ENCODE measurements at regions of chr6 and their contacts with region 1.

Region 1: DNA sequence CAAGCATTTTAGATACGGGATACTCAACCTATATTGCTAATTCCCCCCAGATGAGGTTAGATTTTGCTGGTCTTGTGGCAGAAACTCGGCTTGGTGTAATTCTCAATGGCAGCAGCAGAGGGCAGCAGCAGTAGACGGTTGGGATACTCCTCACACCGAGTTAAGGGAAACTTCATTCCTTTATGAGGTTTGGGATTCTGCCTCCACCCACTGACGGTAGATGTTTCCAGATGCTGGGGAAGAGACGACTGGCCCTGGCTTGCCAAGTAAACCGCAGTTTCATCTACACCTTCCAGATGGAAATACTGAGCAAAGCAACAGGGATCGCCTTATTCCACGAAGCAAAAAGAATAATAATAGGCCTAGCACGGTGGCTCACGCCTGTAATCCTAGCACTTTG is 8.2 kb upstream of the TBC1D7 start:
- DNase-seq: peak; percentile 78 to 81
- H3K4me3 ChIP-seq: no peak overlapping the region
- H3K27ac ChIP-seq: no peak overlapping the region
- H3K4me1 ChIP-seq: no peaks in the 10 kb centered on the region
- H3K27me3 ChIP-seq: no peaks in the 10 kb centered on the region
- CTCF ChIP-seq: peak; percentile 69 to 93 (median 86)
- POLR2A ChIP-seq: no peak

Region 2: GRCh38 chr6:12911387-12911960 is 425.1 kb before region 1 on chr6:
- intact Hi-C with region 1: loop called (anchors 5 kb)
- DNase-seq: no peak
- H3K4me3 ChIP-seq: no peak overlapping the region
- H3K27ac ChIP-seq: no peak overlapping the region
- H3K4me1 ChIP-seq: no peaks in the 10 kb centered on the region
- H3K27me3 ChIP-seq: no peaks in the 10 kb centered on the region
- CTCF ChIP-seq: peak in 4 of 6 experiments; percentile 26 to 76 (median 66)
- POLR2A ChIP-seq: no peak

Region 3: GRCh38 chr6:13544454-13545186 is 208.1 kb after region 1 on chr6:
- intact Hi-C with region 1: loop called (anchors 5 kb)
- DNase-seq: no peak
- H3K4me3 ChIP-seq: no peak overlapping the region
- H3K27ac ChIP-seq: no peak overlapping the region
- H3K4me1 ChIP-seq: no peaks in the 10 kb centered on the region
- H3K27me3 ChIP-seq: no peaks in the 10 kb centered on the region
- CTCF ChIP-seq: no peak
- POLR2A ChIP-seq: no peak

Region 4: DNA sequence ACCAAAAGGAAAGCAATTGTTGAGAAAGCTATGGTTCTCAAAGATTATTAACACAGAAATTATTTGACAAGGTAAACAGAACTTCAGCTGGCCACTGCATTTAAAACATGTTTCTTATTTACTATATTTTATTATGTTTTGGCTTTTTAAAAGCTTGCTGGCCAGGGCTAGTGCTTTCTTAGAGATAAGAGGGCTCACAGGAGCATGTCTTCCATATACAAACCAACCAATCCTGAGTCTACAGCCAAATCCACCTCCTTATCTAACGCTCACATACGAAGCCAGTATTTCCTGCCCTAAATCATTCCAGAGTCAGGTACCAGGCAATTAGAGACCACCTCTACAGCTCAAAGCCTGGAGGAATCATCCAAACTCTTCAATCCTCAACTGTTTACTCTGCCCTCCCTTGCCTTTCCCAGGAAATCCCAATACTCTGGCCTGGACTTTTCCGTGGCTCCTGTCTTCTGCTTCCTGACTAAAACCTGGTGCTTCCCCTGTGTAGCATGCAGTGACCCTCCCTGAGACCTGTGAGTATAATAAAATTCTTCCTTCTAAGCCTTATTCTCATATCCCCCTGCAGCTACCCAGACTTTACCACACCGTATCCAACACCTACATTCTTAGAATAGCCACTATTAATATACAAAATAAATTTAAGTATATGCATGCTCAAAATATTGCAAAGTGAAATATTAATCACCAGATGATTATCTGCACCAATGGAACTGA is 341.9 kb after region 1 on chr6:
- intact Hi-C with region 1: no loop called
- DNase-seq: no peak
- H3K4me3 ChIP-seq: no peak overlapping the region
- H3K27ac ChIP-seq: no peak overlapping the region
- H3K4me1 ChIP-seq: no peaks in the 10 kb centered on the region
- H3K27me3 ChIP-seq: no peaks in the 10 kb centered on the region
- CTCF ChIP-seq: no peak
- POLR2A ChIP-seq: no peak